ENCODE measurements at regions of chr11 and their contacts with region 1.

Region 1: GRCh38 chr11:115408378-115408921 is 95.8 kb downstream of the CADM1 start:
- DNase-seq: no peak
- H3K4me3 ChIP-seq: no peak overlapping the region
- H3K27ac ChIP-seq: no peak overlapping the region
- H3K4me1 ChIP-seq: no peaks in the 10 kb centered on the region
- H3K27me3 ChIP-seq: no peaks in the 10 kb centered on the region
- CTCF ChIP-seq: no peak

Region 2: DNA sequence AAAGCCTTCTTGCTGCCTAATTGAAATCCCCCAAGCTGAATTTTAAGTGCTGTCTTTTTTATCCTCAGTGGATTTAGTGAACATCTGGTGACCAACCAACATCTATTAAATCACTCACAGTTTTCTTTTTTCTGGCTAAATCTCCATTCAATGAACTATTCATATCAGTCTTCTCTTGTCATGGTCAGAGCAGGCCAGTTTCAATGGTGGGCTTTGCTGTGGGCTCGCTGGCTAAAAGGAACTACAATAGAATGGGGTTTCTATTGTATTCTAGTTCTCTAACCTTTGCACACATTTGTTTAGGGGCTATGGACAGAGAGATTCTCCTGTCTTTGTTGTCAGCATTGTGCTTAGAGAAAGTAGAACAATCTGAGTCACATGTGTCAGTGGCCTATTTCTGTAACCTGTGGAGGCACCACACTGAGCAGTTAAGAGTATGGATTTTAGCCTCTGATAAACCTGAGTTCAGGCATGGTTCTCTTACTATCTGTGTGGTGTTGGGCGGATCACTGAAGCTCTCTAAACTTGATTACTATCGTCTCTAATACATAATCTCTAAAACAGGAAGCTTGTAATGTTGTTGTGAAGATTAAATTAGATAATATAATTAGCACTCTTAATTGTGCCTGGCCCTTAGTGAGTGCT is 189.9 kb after region 1 on chr11:
- CTCF ChIA-PET with region 1: no interaction called
- dilution Hi-C with region 1: no loop called
- in situ Hi-C with region 1: no loop called
- intact Hi-C with region 1: no loop called
- DNase-seq: no peak
- H3K4me3 ChIP-seq: no peak overlapping the region
- H3K27ac ChIP-seq: no peak overlapping the region
- H3K4me1 ChIP-seq: no peaks in the 10 kb centered on the region
- H3K27me3 ChIP-seq: no peaks in the 10 kb centered on the region
- CTCF ChIP-seq: no peak

Region 3: GRCh38 chr11:115659061-115659963 is 250.9 kb after region 1 on chr11:
- CTCF ChIA-PET with region 1: no interaction called
- dilution Hi-C with region 1: no loop called
- in situ Hi-C with region 1: no loop called
- intact Hi-C with region 1: loop called (anchors 2 kb)
- DNase-seq: peak; percentile 25
- H3K4me3 ChIP-seq: peak overlapping the region; percentile 19 to 49 (median 45)
- H3K27ac ChIP-seq: peak overlapping the region; percentile 10
- H3K4me1 ChIP-seq: peaks cover 16% of the 10 kb centered on the region
- H3K27me3 ChIP-seq: no peaks in the 10 kb centered on the region
- CTCF ChIP-seq: no peak